WTC11 (cell line): ENCODE measurements at regions of chr6 and their contacts with region 1.

Region 1: DNA sequence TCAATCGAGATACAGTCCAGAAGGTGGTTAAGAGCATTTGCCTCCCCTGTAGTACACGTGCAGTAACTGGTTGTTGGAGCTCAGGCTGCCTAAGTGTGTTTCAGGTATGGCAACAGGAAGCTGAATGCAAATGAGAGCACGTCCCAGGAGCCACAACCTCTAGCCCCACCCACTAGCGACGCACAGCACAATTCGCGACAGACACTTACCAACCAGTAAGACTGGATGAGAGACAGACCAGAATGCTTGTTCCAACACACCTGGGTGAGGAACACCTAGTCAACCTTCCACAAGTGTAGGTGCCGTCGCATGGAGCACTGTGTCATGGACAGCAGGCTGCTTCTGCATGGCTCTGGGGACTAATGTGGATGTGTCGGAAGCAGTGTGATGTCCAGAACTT is 7.2 kb upstream of the SERPINB1 start:
- DNase-seq: peak; percentile 63
- ATAC-seq: peak; percentile 82
- H3K4me3 Mint-ChIP-seq: 0 out of 2 replicates have a peak overlapping the region, but pooled peaks have one; percentile 0
- H3K27ac Mint-ChIP-seq: peak overlapping the region; percentile 88
- H3K4me1 Mint-ChIP-seq: peaks cover 37% of the 10 kb centered on the region
- H3K27me3 Mint-ChIP-seq: no peaks in the 10 kb centered on the region
- CTCF ChIP-seq: no peak

Region 2: GRCh38 chr6:2866181-2866846 is 17.5 kb after region 1 on chr6:
- CTCF ChIA-PET with region 1: interaction called, 13 read pairs
- POLR2A ChIA-PET with region 1: no interaction called
- DNase-seq: no peak
- ATAC-seq: peak; percentile 78
- H3K4me3 Mint-ChIP-seq: peak overlapping the region; percentile 47
- H3K27ac Mint-ChIP-seq: peak overlapping the region; percentile 89
- H3K4me1 Mint-ChIP-seq: peaks cover 71% of the 10 kb centered on the region
- H3K27me3 Mint-ChIP-seq: no peaks in the 10 kb centered on the region
- CTCF ChIP-seq: no peak

Region 3: GRCh38 chr6:2911171-2911570 is 62.3 kb after region 1 on chr6:
- CTCF ChIA-PET with region 1: interaction called, 15 read pairs
- POLR2A ChIA-PET with region 1: no interaction called
- DNase-seq: no peak
- ATAC-seq: no peak
- H3K4me3 Mint-ChIP-seq: no peak overlapping the region
- H3K27ac Mint-ChIP-seq: no peak overlapping the region
- H3K4me1 Mint-ChIP-seq: peaks cover 60% of the 10 kb centered on the region
- H3K27me3 Mint-ChIP-seq: no peaks in the 10 kb centered on the region
- CTCF ChIP-seq: no peak

Region 4: GRCh38 chr6:2917065-2917464 is 68.2 kb after region 1 on chr6:
- CTCF ChIA-PET with region 1: interaction called, 15 read pairs
- POLR2A ChIA-PET with region 1: interaction called, 4 read pairs
- DNase-seq: no peak
- ATAC-seq: peak; percentile 43
- H3K4me3 Mint-ChIP-seq: no peak overlapping the region
- H3K27ac Mint-ChIP-seq: peak overlapping the region; percentile 86
- H3K4me1 Mint-ChIP-seq: peaks cover 70% of the 10 kb centered on the region
- H3K27me3 Mint-ChIP-seq: peaks cover 8% of the 10 kb centered on the region
- CTCF ChIP-seq: peak; percentile 20; the same call in 1 of the 2 replicates

Region 5: DNA sequence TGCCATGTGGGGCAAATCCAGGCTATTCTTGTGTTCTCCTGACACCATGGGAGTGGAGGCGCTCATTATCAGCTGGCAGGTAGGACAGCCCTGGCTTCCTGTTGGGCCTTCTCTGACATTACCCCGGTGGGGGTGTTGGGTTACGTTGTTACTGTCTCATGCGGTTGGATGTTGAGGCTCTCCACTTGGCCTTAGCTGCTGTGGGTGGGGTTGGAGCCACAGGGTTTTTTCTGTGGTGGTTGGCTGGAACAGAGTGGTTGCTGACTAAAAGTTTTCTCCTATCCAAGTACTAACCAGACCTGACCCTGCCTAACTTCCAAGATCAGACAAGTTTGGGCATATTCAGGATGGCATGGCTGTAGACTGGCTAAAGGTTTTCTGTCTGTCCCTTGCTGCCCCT is 239.6 kb after region 1 on chr6:
- CTCF ChIA-PET with region 1: no interaction called
- POLR2A ChIA-PET with region 1: no interaction called
- DNase-seq: no peak
- ATAC-seq: no peak
- H3K4me3 Mint-ChIP-seq: no peak overlapping the region
- H3K27ac Mint-ChIP-seq: no peak overlapping the region
- H3K4me1 Mint-ChIP-seq: no peaks in the 10 kb centered on the region
- H3K27me3 Mint-ChIP-seq: peaks cover 16% of the 10 kb centered on the region
- CTCF ChIP-seq: no peak